HepG2 (cell line): ENCODE measurements at regions of chr18 and their contacts with region 1.

Region 1: GRCh38 chr18:38025433-38026038 is 459.9 kb upstream of the CELF4 start:
- DNase-seq: no peak
- ATAC-seq: no peak
- H3K4me3 ChIP-seq: no peak overlapping the region
- H3K27ac ChIP-seq: no peak overlapping the region
- H3K4me1 ChIP-seq: no peaks in the 10 kb centered on the region
- H3K27me3 ChIP-seq: peaks cover 0 to 9% of the 10 kb centered on the region in 2 experiments; a peak in 2 of 5 replicates
- CTCF ChIP-seq: no peak
- EP300 ChIP-seq: no peak
- POLR2A ChIP-seq: no peak
- RAD21 ChIP-seq: no peak

Region 2: GRCh38 chr18:37953876-37954275 is 71.7 kb before region 1 on chr18:
- CTCF ChIA-PET with region 1: no interaction called
- POLR2A ChIA-PET with region 1: no interaction called
- in situ Hi-C with region 1: no loop called
- intact Hi-C with region 1: loop called (anchors 2 kb)
- DNase-seq: no peak
- ATAC-seq: no peak
- H3K4me3 ChIP-seq: no peak overlapping the region
- H3K27ac ChIP-seq: no peak overlapping the region
- H3K4me1 ChIP-seq: no peaks in the 10 kb centered on the region
- H3K27me3 ChIP-seq: no peaks in the 10 kb centered on the region
- CTCF ChIP-seq: no peak
- EP300 ChIP-seq: no peak
- POLR2A ChIP-seq: no peak
- RAD21 ChIP-seq: no peak